CD4-positive, alpha-beta T cell (primary cell): ENCODE measurements at regions of chr19 and their contacts with region 1.

Region 1: DNA sequence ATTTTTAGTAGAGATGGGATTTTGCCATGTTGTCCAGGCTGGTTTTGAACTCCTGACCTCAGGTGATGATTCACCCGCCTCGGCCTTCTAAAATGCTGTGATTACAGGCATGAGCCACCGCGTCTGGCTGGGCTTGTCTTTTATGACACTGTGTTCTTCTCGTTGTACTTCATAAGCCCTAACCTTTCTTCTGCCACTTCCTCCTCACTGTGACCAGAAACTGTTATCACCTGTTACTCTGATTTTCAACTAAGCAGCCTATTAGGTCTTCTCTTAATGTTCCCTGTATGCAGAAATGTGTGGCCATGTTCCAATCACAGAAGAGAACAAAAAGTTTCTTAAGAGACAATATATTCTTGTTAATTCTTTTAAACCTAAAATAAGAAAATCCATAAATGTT is 16.4 kb downstream of the ZNF790 start:
- DNase-seq: no peak
- ATAC-seq: no peak
- H3K4me3 ChIP-seq: no peak overlapping the region
- H3K4me3 Mint-ChIP-seq: no peak overlapping the region
- H3K27ac ChIP-seq: no peak overlapping the region
- H3K27ac Mint-ChIP-seq: no peak overlapping the region
- H3K4me1 ChIP-seq: no peaks in the 10 kb centered on the region
- H3K4me1 Mint-ChIP-seq: no peaks in the 10 kb centered on the region
- H3K27me3 ChIP-seq: no peaks in the 10 kb centered on the region
- H3K27me3 Mint-ChIP-seq: no peaks in the 10 kb centered on the region
- CTCF ChIP-seq: no peak

Region 2: GRCh38 chr19:36876993-36877938 is 55.5 kb after region 1 on chr19:
- CTCF ChIA-PET with region 1: no interaction called
- POLR2A ChIA-PET with region 1: no interaction called
- intact Hi-C with region 1: loop called in 1 of 2 experiments (anchors 5 kb)
- DNase-seq: no peak
- ATAC-seq: no peak
- H3K4me3 ChIP-seq: no peak overlapping the region
- H3K4me3 Mint-ChIP-seq: no peak overlapping the region
- H3K27ac ChIP-seq: no peak overlapping the region
- H3K27ac Mint-ChIP-seq: no peak overlapping the region
- H3K4me1 ChIP-seq: no peaks in the 10 kb centered on the region
- H3K4me1 Mint-ChIP-seq: no peaks in the 10 kb centered on the region
- H3K27me3 ChIP-seq: no peaks in the 10 kb centered on the region
- H3K27me3 Mint-ChIP-seq: no peaks in the 10 kb centered on the region
- CTCF ChIP-seq: no peak